HepG2 (cell line): ENCODE measurements at regions of chr11 and their contacts with region 1.

Region 1: GRCh38 chr11:33065445-33066178 is 26.2 kb downstream of the TCP11L1 start:
- DNase-seq: peak; percentile 50
- ATAC-seq: peak; percentile 94
- H3K4me3 ChIP-seq: no peak overlapping the region
- H3K27ac ChIP-seq: no peak overlapping the region
- H3K4me1 ChIP-seq: peaks cover 18% of the 10 kb centered on the region
- H3K27me3 ChIP-seq: no peaks in the 10 kb centered on the region; a peak in 1 of 5 replicates
- CTCF ChIP-seq: peak; percentile 96
- EP300 ChIP-seq: no peak
- POLR2A ChIP-seq: no peak
- RAD21 ChIP-seq: peak; percentile 93

Region 2: DNA sequence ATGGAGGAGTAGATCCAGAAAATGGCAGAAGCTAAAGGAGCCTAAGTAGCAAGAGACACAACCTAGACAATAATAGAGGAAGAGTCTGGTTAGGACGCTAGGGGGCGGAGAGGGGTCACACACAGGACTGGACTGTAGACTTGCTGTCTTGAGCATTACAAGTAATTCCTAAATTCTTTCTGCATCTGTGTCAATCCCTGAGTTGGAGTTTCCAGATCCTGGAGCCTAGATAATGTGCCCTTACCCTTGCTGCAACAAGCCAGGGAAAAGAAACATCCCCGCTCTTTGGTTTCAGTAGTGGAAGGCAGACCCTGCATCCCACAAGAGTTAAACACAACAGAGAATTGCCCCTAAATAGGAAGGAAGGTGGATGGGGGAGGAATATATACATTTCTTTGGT is 256.3 kb before region 1 on chr11:
- CTCF ChIA-PET with region 1: interaction called, 3 read pairs
- POLR2A ChIA-PET with region 1: no interaction called
- in situ Hi-C with region 1: no loop called
- intact Hi-C with region 1: loop called (anchors 1 kb)
- DNase-seq: peak; percentile 45
- ATAC-seq: peak; percentile 98
- H3K4me3 ChIP-seq: no peak overlapping the region
- H3K27ac ChIP-seq: no peak overlapping the region
- H3K4me1 ChIP-seq: no peaks in the 10 kb centered on the region
- H3K27me3 ChIP-seq: peaks cover 0 to 3% of the 10 kb centered on the region in 2 experiments; a peak in 1 of 5 replicates
- CTCF ChIP-seq: peak; percentile 86
- EP300 ChIP-seq: no peak
- POLR2A ChIP-seq: no peak
- RAD21 ChIP-seq: peak; percentile 26; the same call in 1 of the 2 replicates

Region 3: GRCh38 chr11:32960553-32961164 is 105.0 kb before region 1 on chr11:
- CTCF ChIA-PET with region 1: interaction called, 52 read pairs
- POLR2A ChIA-PET with region 1: no interaction called
- in situ Hi-C with region 1: loop called (anchors 5 kb)
- intact Hi-C with region 1: loop called (anchors 1 kb)
- DNase-seq: peak; percentile 52
- ATAC-seq: no peak
- H3K4me3 ChIP-seq: no peak overlapping the region
- H3K27ac ChIP-seq: no peak overlapping the region
- H3K4me1 ChIP-seq: no peaks in the 10 kb centered on the region
- H3K27me3 ChIP-seq: no peaks in the 10 kb centered on the region
- CTCF ChIP-seq: peak; percentile 66
- EP300 ChIP-seq: no peak
- POLR2A ChIP-seq: no peak
- RAD21 ChIP-seq: peak; percentile 29; the same call in 1 of the 2 replicates

Region 4: DNA sequence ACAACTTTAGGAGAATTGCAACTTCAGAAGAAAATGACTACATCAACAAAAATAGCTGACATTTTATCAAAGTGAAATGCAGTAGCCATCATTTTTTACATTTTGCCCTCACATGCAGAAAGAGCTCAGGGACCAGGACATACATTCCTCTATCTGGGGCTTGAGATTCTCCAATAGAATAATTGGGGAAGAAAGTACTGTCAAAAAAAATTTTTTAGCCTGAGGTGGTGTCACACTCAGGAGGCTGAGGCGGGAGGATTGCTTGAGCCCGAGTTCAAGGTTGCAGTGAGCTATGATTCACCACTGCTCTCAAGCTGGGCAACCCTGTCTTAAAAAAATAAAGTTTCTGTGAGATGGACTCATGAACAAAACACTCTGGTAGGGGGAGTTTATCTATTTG is 82.1 kb before region 1 on chr11:
- CTCF ChIA-PET with region 1: no interaction called
- POLR2A ChIA-PET with region 1: no interaction called
- in situ Hi-C with region 1: no loop called
- intact Hi-C with region 1: loop called (anchors 5 kb)
- DNase-seq: no peak
- ATAC-seq: no peak
- H3K4me3 ChIP-seq: no peak overlapping the region
- H3K27ac ChIP-seq: no peak overlapping the region
- H3K4me1 ChIP-seq: no peaks in the 10 kb centered on the region
- H3K27me3 ChIP-seq: no peaks in the 10 kb centered on the region
- CTCF ChIP-seq: no peak
- EP300 ChIP-seq: no peak
- POLR2A ChIP-seq: no peak
- RAD21 ChIP-seq: no peak

Region 5: DNA sequence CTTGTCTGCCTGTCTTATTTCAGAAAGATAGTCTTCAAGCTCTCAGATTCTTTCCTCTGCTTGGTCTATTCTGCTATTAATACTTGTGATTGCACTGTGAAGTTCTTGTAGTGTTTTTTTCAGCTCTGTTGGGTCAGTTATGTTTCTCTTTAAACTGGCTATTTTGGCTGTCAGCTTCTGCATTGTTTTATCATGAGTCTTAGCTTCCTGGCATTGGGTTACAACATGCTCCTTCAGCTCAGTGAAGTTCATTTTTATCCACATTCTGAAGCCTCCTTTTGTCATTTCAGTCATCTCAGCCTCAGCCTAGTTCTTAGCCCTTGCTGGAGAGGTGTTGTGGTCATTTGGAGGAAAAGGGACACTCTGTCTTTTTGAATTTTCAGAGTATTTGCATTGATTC is 65.4 kb before region 1 on chr11:
- CTCF ChIA-PET with region 1: no interaction called
- POLR2A ChIA-PET with region 1: no interaction called
- in situ Hi-C with region 1: no loop called
- intact Hi-C with region 1: loop called (anchors 5 kb)
- DNase-seq: no peak
- ATAC-seq: no peak
- H3K4me3 ChIP-seq: no peak overlapping the region
- H3K27ac ChIP-seq: no peak overlapping the region
- H3K4me1 ChIP-seq: peaks cover 11% of the 10 kb centered on the region; the same call in 1 of the 2 replicates
- H3K27me3 ChIP-seq: no peaks in the 10 kb centered on the region
- CTCF ChIP-seq: no peak
- EP300 ChIP-seq: no peak
- POLR2A ChIP-seq: no peak
- RAD21 ChIP-seq: no peak

Region 6: GRCh38 chr11:33172996-33173395 is 107.4 kb after region 1 on chr11:
- CTCF ChIA-PET with region 1: no interaction called
- POLR2A ChIA-PET with region 1: no interaction called
- in situ Hi-C with region 1: no loop called
- intact Hi-C with region 1: no loop called
- DNase-seq: peak; percentile 32
- ATAC-seq: peak; percentile 97
- H3K4me3 ChIP-seq: no peak overlapping the region
- H3K27ac ChIP-seq: no peak overlapping the region
- H3K4me1 ChIP-seq: peaks cover 5% of the 10 kb centered on the region; the same call in 1 of the 2 replicates
- H3K27me3 ChIP-seq: no peaks in the 10 kb centered on the region
- CTCF ChIP-seq: no peak
- EP300 ChIP-seq: no peak
- POLR2A ChIP-seq: no peak
- RAD21 ChIP-seq: no peak